Posterior vena cava (tissue), 2 donors: ENCODE measurements at regions of chr9 and their contacts with region 1.

Region 1: GRCh38 chr9:4143936-4144717 is 155.7 kb downstream of the GLIS3 start:
- DNase-seq: no peak

Region 2: DNA sequence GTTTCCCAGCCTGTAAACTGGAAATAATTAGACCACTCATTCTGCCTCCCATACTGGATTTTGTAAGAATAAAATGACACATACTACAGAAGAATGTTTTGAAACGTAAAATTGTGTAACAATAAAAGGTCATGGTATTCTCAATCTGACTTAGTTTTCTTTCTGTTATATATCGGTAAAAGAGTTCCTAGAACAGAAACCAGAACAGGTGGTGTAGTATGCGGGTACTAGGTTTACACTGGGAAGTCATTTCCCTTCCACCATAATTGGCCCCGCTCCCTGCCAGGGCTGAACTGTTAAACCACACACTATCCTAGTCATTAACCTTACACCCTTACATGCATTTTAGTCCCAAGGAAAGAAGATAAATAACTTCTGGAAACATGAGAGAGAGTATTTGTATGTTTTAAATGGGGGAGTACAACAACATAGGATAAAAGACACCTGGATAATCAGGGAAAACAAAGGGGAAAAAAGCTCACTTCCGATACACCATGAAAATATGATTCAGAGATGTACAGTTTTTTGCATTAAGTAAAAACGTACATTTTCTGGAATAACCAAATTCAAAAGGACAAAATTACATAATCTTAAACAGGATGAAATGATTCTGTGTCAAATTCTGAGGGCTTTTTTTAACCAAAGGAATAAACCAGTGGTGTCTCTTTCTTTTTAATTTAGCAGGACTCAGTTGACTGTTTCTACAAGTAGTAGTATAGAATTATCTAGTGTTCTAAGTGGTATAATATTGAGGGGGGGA is 44.0 kb before region 1 on chr9:
- intact Hi-C with region 1: loop called in 1 of 2 experiments (anchors 10 kb)
- DNase-seq: no peak